ENCODE measurements at regions of chr13 and their contacts with region 1.

Region 1: DNA sequence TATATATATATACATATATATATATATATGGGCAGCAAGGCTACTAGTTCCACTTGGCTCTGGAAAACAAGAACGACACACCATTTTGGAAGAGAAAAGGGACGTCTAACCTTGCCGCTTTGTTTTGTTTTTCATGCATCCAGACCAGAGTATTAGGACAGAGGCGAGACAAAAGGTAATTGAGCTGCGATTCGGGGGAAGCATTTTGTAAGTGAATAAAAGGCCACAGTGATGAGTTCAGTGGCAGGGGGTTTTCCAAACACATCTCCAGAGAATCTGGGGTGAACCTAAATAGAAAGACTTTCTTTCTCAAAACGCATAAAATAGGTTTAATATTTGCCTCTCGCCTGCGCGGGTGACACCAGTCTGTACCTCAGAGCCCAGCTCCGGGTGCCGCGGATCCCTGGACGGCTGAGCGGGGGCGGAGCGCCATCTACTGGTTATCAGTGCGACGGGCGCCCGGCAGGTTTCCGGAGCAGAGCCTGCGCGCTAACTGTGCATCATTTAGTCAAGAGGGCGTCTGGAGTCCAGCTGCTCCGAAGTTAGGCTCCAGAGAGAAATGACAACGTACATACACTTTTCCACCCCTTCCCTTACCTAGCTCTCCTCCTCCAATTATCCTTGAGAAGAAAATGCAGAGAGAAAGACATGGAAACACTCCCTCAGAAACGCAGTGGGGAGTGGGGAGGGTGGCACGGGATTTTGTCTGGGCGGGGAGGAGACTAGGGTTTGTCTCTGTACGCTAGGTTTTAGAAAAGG is 262.3 kb downstream of the TBC1D4 start:
- DNase-seq: peak; percentile 66 to 96
- H3K4me3 ChIP-seq: no peak overlapping the region
- CTCF ChIP-seq: peak in 1 of 3 donors; percentile 49
- POLR2A ChIP-seq: no peak

Region 2: DNA sequence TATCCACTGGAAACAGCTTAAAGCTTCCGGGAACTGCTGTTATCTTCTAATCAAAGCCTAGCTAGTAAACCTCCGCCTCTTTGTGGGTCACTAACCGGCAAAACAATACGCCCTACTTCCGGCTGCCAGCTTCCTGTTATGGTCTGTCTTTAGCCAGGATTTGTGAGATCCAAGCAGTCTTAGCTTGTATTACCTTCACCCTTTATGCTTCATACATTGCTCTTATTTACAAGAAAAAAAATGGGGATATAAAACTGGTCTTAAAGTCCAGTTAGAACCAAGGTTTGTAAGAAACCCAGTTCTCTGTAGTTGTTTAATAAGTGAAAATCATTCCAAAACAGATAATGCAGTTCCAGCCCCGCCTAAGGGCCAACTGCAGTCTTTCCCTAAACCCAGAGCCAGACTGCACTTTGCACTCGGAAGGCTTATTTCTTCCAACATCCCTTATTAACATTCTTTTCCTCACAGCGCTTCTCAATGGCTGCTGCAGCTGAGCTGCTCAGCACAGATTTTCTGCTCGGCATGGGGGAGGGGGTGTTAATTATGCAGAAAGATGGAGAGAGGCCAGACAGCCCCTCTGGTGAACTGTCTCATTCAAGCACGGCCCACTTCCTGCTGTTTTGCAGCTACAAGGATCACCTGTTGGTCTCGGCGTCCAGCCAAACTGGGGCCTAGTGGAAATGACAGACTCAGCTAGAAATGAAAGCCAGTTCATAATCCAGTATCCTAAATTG is 1453.8 kb before region 1 on chr13:
- intact Hi-C with region 1: loop called (anchors 10 kb)
- DNase-seq: peak; percentile 18 to 90
- H3K4me3 ChIP-seq: no peak overlapping the region
- CTCF ChIP-seq: no peak
- POLR2A ChIP-seq: no peak

Measured in lower leg skin (tissue), 4 donors.